ENCODE measurements at regions of chr12 and their contacts with region 1.

Region 1: DNA sequence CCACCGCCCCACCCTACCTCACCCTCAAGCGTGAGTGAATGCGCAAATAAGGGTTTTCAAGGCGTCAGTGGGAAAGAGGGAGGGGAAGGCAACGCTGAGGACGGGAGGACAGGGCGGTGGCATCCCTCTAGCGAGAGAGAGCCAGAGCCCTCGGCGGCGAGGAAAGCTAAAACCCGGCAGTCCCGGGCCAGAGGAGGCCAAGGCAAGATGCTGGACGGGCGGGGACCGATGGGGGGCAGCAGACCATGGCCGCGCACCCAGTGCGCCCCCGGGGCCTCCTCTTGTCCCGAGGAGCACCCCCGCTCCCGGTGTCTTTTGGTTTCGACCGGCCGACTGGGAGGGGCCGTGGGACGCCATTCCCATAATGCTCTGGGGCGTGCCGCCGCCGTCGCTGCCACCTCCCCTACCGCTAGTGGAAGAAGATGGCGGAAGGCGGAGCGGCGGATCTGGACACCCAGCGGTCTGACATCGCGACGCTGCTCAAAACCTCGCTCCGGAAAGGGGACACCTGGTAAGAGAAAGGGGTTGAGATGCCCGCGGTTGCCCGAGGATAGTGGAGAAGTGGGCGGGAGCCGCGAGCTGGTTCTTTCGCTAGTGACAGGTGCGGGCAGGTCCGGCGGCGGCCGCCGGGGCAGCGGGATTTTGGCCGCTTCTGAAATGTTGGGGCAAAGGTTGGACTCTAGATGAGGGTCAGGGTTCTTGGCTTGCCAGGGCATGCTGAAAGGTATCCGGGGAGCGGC is at the start of gene USP15:
- DNase-seq: peak; percentile 97
- H3K4me3 Mint-ChIP-seq: peak within 1 kb of the TSS; percentile 94
- H3K27ac Mint-ChIP-seq: peak within 1 kb of the TSS; percentile 98
- H3K4me1 Mint-ChIP-seq: peaks cover 60% of the 10 kb centered on the region
- H3K27me3 Mint-ChIP-seq: no peaks in the 10 kb centered on the region
- total RNA-seq, gene USP15: 76.8 to 82.8 TPM

Region 2: DNA sequence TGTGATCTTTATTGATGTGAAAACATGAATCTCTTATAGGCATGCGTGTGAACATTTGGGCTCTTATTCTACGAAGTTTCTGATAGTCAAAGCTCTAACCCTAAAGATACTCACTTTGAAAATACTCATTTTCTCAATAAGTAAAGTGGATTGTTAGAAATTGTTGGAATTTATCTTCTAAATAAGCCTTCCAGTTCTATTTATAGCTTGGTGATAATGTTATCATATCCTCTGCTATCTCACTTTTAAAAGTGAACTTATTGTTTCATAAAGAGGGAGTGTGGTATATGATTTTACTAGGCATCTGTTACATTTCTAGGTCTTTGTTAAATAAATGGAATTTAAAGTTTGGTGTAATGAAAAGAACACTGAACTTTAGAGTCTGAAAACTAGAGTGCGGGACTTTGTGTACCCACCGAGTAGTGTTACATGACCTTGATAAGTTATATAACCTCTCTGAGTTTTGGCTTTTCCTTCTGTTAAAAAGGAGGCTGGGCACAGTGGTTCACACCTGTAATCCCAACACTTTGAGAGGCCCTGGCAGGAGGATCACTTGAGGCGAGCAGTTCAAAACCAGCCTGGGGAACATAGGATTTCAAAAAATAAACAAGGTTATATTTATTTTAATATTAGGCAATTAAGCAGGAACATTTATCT is 13.7 kb after region 1 on chr12:
- CTCF ChIA-PET with region 1: interaction called, 5 read pairs
- POLR2A ChIA-PET with region 1: interaction called, 5 read pairs
- intact Hi-C with region 1: loop called (anchors 2 kb)
- DNase-seq: no peak
- H3K4me3 Mint-ChIP-seq: no peak overlapping the region
- H3K27ac Mint-ChIP-seq: no peak overlapping the region
- H3K4me1 Mint-ChIP-seq: peaks cover 74% of the 10 kb centered on the region
- H3K27me3 Mint-ChIP-seq: no peaks in the 10 kb centered on the region

Region 3: DNA sequence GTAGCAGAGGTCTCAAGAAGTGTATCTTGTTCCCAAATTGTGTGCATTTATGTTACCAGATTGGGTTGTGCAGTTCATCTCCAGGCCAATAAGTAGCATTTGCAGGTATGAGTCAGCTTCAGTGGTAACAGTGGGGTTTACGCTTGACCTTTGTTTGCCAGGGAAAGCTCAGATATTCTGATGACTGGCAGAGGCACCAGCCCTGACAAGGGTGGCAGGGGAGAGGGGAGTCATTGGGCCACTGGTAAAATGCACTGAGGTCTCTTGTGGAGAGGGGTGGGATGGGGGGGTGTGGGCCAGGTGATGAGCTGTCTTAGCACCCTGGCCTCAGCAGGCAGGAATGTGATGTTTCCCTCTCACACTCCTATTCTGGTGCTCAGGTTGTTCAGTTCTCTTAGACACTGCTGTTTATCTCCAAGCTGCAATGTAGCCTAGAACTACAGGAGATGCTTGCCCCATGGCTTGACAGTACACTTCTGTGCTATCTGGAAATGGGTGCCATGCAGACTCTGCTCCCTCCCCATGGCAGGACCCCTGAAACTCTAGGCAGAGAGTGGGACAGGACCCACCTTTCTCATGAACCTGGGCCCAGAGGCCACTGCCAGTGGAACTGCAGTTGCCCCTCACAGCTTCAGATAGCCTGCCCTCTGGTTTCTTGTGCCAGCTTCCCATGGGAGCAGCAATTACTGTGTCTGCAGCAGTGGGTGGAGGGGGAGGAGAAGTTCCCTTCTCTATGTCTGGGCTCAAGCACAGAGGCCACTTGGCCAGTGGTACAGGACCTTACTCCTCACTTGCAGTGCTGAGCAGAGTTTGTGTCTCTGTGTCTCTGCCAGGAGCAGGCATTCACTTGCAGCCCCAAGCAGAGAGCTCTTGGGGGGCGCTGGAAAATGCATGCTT is 31.9 kb after region 1 on chr12:
- CTCF ChIA-PET with region 1: no interaction called
- POLR2A ChIA-PET with region 1: interaction called, 5 read pairs
- intact Hi-C with region 1: loop called (anchors 1 kb)
- DNase-seq: peak; percentile 44
- H3K4me3 Mint-ChIP-seq: no peak overlapping the region
- H3K27ac Mint-ChIP-seq: peak overlapping the region; percentile 67
- H3K4me1 Mint-ChIP-seq: peaks cover 78% of the 10 kb centered on the region
- H3K27me3 Mint-ChIP-seq: no peaks in the 10 kb centered on the region

Region 4: DNA sequence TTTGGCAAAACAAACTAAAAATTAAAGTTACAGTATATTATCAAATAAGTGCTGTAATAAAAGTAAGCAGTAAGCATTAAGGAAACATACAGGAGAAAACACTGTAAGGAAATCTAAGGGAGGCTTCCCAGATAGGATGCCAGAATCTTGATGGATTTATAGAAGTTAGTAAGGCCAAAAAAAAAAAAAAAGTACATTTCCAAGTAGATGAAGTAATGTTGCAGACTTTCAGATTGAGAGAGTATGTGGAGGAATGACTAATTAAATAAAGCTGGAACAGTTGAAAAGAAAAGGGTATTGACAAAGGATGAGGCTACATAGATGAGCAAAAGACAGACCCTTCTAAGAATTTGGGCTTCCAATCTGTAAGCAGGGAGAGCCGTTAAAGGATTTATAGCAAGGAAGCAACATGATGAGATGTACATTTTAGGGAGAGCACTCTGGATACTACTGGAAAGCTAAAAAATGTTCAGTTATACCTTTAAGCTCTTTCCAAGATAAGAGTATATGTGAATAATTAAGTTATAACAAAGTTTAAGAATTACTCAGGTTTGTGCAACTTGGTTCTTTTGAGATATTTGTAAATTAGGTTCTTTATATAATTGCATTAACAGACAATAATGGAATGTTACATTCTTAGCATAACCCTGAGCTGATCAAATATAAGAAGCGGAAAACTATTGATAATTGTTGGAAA is 119.0 kb after region 1 on chr12:
- CTCF ChIA-PET with region 1: no interaction called
- POLR2A ChIA-PET with region 1: interaction called, 3 read pairs
- intact Hi-C with region 1: loop called (anchors 5 kb)
- DNase-seq: no peak
- H3K4me3 Mint-ChIP-seq: no peak overlapping the region
- H3K27ac Mint-ChIP-seq: no peak overlapping the region
- H3K4me1 Mint-ChIP-seq: peaks cover 19% of the 10 kb centered on the region
- H3K27me3 Mint-ChIP-seq: no peaks in the 10 kb centered on the region

Region 5: GRCh38 chr12:62466594-62467491 is 206.7 kb after region 1 on chr12 and contains the start of gene MON2:
- CTCF ChIA-PET with region 1: interaction called, 4 read pairs
- POLR2A ChIA-PET with region 1: no interaction called
- intact Hi-C with region 1: loop called (anchors 1 kb)
- DNase-seq: peak; percentile 90
- H3K4me3 Mint-ChIP-seq: peak within 1 kb of the TSS; percentile 93
- H3K27ac Mint-ChIP-seq: peak within 1 kb of the TSS; percentile 88
- H3K4me1 Mint-ChIP-seq: peaks cover 22% of the 10 kb centered on the region
- H3K27me3 Mint-ChIP-seq: no peaks in the 10 kb centered on the region
- total RNA-seq, gene MON2: 29.2 to 35.1 TPM

Region 6: GRCh38 chr12:62603061-62603810 is 343.1 kb after region 1 on chr12:
- CTCF ChIA-PET with region 1: interaction called, 3 read pairs
- POLR2A ChIA-PET with region 1: no interaction called
- intact Hi-C with region 1: loop called (anchors 1 kb)
- DNase-seq: peak; percentile 85
- H3K4me3 Mint-ChIP-seq: peak overlapping the region; percentile 84
- H3K27ac Mint-ChIP-seq: peak overlapping the region; percentile 99
- H3K4me1 Mint-ChIP-seq: peaks cover 35% of the 10 kb centered on the region
- H3K27me3 Mint-ChIP-seq: no peaks in the 10 kb centered on the region

Region 7: DNA sequence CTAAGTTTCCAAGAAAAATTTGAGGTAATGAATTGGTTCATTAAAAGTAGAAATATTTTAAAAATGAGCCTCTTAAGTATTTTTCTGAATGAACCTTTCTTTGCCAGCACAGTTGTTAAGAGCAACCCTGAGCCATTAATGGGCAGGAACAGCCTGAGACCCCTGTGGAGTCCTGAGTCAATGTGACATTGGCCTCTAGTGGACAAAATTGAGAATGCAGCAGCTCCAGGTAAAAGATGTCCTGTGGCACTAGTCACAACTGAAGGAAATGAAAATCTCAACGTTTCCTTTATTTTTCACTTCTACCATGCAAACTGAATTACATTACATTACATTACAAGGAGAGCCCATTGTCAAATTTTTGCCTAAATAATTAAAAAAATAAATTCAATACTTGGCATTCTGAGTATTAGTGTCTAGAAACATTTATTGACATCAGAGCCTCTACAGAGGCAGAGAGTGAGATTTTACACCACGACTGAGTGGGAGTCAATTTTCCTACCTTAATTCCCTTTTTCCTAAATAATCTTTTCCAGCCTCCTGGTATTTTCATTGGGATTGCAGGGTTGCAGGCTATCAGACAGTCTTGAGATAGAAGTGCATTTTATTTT is 539.1 kb after region 1 on chr12:
- CTCF ChIA-PET with region 1: no interaction called
- POLR2A ChIA-PET with region 1: no interaction called
- intact Hi-C with region 1: loop called (anchors 2 kb)
- DNase-seq: peak; percentile 48
- H3K4me3 Mint-ChIP-seq: no peak overlapping the region
- H3K27ac Mint-ChIP-seq: no peak overlapping the region
- H3K4me1 Mint-ChIP-seq: no peaks in the 10 kb centered on the region
- H3K27me3 Mint-ChIP-seq: peaks cover 4% of the 10 kb centered on the region